Spleen (tissue), 13 donors: ENCODE measurements at regions of chr13 and their contacts with region 1.

Region 1: DNA sequence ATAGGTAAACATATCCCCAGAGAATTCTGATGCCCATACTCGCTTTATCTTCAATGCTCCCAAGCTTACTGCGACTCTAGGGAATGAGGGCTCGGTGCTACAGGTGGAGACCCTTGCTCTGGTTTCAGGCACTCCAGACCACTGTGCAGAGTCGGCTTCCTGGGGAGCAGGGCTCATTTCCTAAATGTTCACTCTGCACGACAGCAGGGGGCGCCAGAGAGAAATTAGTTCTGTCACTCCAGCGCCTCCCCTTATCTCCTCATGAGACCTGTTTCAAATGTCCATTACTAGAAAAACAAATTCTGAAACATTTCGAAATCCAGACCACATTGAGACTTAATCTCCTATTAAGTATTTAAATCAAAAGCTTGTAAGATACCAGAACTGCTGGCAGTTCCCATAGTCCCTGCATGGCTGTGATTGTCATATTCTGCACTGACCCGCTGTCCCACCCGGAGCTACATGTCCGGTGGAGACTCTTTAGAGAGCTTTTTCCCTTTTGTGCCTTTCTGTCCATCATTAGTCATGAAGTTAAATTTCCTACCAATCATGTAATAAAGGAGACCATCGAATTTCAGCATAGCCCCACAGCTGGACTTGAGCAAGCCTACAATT is 22.4 kb downstream of the EPSTI1 start:
- DNase-seq: peak; percentile 91
- H3K4me3 ChIP-seq: no peak overlapping the region
- H3K27ac ChIP-seq: no peak overlapping the region
- H3K4me1 ChIP-seq: peaks cover 9 to 46% (median 30%) of the 10 kb centered on the region in 6 donors
- H3K27me3 ChIP-seq: no peaks in the 10 kb centered on the region
- CTCF ChIP-seq: peak; percentile 21 to 87 (median 70)
- POLR2A ChIP-seq: no peak

Region 2: GRCh38 chr13:43085545-43085944 is 115.9 kb after region 1 on chr13:
- intact Hi-C with region 1: loop called (anchors 10 kb)
- DNase-seq: no peak
- H3K4me3 ChIP-seq: no peak overlapping the region
- H3K27ac ChIP-seq: no peak overlapping the region
- H3K4me1 ChIP-seq: peaks cover 8 to 36% (median 10%) of the 10 kb centered on the region in 6 donors
- H3K27me3 ChIP-seq: no peaks in the 10 kb centered on the region
- CTCF ChIP-seq: peak; percentile 41 to 79 (median 64)
- POLR2A ChIP-seq: no peak

Region 3: GRCh38 chr13:43878892-43879754 is 909.5 kb after region 1 on chr13 and contains the start of gene CCDC122:
- intact Hi-C with region 1: loop called (anchors 10 kb)
- DNase-seq: peak; percentile 97
- H3K4me3 ChIP-seq: peak within 1 kb of the TSS; percentile 56 to 83 (median 68)
- H3K27ac ChIP-seq: peak within 1 kb of the TSS; percentile 92 to 98 (median 97)
- H3K4me1 ChIP-seq: peaks cover 14 to 46% (median 31%) of the 10 kb centered on the region in 6 donors
- H3K27me3 ChIP-seq: no peaks in the 10 kb centered on the region
- CTCF ChIP-seq: peak in 3 of 11 experiments; percentile 10 to 15 (median 11)
- POLR2A ChIP-seq: peak in 2 of 3 donors; percentile 67 to 75
- total RNA-seq, gene CCDC122: 3.6 to 10.9 (median 7.3) TPM